ENCODE measurements at regions of chr1 and their contacts with region 1.

Region 1: DNA sequence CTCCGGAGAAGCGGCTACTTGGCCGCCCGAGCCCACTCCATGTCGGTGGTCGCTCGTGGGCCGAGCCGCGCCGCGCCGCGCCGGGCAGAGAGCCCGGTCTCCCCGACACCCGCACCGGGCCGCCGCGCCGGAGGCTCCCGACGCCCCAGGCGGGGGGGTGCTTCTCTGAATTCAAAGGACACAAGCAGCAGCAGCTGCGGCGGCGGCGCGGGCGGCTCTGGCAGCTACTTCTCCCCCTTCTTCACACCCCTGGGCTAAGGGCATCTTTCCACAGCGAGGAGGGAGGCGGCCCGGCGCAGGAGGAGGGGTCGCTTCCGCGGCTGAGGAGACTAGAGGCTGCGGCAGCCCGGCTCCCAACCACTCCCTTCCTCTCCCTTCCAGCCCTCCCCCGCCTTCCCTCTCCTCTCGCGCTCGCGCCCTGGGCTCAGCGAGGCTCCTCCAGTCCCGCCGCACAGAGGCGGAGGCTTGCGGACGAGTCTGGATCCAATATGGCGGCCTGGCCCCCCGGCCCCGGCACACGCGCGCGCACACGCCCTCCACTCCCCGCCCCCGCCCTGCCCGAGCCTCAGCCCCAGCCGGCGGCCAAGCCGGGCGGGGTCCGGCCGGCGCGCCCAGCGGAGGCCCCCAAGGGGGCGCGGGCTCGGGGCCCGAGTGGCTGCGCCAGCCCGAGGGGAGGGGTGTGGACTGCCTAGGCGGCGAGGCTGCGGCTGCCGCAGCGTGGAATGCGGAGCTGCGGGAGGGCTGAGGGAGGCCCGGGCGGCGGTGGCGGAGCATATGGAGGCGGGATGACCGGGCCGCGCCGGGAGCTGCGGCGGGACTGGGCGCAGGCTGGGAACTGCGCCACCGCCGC is at the start of gene CDC42BPA:
- DNase-seq: peak; percentile 71 to 97 (median 84)

Region 2: DNA sequence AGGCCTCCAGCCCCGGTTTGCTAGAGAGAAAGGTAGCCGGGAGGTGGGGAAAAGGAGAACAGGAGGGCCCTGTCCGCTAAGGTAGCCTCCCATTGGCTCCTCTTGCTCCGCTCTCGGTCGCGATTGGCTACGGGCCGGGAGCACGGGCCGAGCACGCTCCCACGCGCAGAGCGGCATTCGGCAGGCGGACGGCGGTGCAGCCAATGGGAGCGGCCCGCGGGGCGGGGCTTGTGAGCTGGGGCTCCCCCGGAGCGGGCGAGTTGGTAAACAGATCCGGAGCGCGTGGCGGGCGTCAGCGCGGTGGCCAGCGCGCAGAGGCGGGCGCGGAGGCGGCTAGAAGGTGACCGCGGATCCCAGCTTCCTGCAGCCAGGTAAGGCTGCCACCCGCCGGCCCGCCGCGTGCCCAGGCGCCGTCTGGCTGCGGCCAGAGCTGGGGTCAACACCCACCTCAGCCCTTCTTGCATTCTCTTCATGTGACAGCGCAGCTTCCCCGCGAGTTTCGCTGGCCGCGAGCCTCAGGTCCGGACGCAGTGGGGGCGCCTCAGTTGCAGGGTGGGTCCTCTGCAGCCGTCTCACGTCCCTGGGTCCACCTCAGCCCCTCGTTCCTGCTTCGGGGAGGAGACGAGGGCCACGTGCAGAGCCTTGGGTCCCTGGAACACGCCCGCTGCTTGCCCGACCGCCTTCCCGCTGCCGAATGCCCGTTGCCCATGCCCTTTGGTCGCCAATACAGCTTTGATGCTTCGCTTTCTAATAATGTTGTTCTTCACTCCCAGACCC is 378.0 kb before region 1 on chr1 and contains the start of gene COQ8A:
- intact Hi-C with region 1: loop called (anchors 5 kb)
- DNase-seq: peak; percentile 99 to 100 (median 100)

Region 3: GRCh38 chr1:227131193-227131592 is 187.0 kb before region 1 on chr1:
- intact Hi-C with region 1: loop called (anchors 10 kb)
- DNase-seq: no peak

Region 4: GRCh38 chr1:227429447-227430359 is 111.5 kb after region 1 on chr1:
- intact Hi-C with region 1: loop called (anchors 5 kb)
- DNase-seq: no peak

Region 5: DNA sequence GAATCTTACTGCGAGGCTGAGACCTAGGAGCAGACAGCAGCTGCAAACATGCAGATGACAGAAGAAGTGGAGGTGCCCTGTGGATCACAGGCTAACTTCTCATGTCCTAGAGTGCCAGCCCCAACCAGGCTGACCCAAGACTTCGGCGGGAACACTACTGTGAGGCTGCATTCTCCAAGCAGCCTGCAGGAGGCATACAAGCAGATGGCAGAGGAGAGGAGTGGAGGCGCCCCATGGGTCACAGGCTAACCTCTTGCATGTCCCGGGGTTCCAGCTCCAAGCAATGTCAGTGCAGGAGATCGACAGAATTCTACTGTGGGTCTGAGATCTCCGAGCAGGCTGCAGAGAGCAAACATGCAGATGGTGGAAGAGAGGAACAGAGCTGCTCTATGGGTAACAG is 147.0 kb after region 1 on chr1:
- intact Hi-C with region 1: no loop called
- DNase-seq: no peak

Measured in posterior cingulate gyrus (tissue), 11 donors.